Dorsolateral prefrontal cortex (tissue), 120 donors: ENCODE measurements at regions of chr2 and their contacts with region 1.

Region 1: DNA sequence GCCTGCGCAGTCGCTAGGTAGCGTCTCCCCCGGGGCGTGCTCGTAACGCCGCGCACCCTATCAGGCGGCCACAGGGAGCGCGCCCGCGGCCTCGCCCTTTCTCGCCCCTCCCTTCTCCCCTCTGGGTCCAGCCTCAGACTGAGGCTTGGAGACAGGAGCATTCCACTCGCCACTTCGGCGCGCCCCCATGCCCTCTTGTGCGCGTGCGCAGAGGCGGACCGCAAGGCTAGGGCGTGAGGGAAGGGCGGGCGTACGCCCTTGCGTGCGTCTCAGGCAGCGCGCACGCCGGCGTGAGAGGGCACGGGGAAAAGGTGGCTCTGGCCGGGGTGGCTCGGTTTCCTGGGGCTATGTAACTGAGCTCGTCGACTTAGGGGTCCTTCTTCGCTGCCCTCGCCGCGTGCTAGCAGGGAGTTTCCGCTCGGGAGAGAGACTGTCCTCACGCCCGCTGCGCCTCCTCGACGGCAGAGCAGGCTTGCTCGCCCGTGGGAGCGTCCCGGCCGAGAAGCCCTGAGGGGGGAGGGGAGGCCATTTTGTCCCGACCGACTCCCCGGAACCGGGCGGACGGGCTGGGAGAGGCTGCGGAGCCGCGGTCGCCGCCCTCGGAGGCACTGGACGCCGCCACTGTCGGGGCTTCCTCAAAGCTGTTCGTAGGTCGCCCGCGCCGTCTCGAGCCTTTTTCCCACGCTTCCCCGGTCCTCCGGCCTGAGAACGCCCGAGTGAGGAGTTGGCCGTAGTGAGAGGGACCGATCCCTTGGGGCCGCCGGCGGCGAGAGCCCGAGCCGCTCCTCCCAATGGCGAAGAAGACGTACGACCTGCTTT is at the start of gene RAB10:
- DNase-seq: peak; percentile 96 to 99 (median 98)
- H3K4me3 ChIP-seq: peak within 1 kb of the TSS; percentile 72 to 99 (median 95)
- H3K27ac ChIP-seq: peak within 1 kb of the TSS; percentile 76 to 99 (median 97)
- H3K27me3 ChIP-seq: no peaks in the 10 kb centered on the region
- CTCF ChIP-seq: peak in 39 of 56 donors; percentile 3 to 68 (median 33)
- total RNA-seq, gene RAB10: 88.3 to 149 (median 112) TPM

Region 2: GRCh38 chr2:25851740-25852503 is 182.1 kb before region 1 on chr2:
- intact Hi-C with region 1: no loop called
- DNase-seq: no peak
- H3K4me3 ChIP-seq: peak overlapping the region in 31 of 59 donors; percentile 2 to 47 (median 16)
- H3K27ac ChIP-seq: peak overlapping the region in 10 of 59 donors; percentile 5 to 57 (median 20)
- H3K27me3 ChIP-seq: no peaks in the 10 kb centered on the region
- CTCF ChIP-seq: peak; percentile 37 to 86 (median 76)

Region 3: DNA sequence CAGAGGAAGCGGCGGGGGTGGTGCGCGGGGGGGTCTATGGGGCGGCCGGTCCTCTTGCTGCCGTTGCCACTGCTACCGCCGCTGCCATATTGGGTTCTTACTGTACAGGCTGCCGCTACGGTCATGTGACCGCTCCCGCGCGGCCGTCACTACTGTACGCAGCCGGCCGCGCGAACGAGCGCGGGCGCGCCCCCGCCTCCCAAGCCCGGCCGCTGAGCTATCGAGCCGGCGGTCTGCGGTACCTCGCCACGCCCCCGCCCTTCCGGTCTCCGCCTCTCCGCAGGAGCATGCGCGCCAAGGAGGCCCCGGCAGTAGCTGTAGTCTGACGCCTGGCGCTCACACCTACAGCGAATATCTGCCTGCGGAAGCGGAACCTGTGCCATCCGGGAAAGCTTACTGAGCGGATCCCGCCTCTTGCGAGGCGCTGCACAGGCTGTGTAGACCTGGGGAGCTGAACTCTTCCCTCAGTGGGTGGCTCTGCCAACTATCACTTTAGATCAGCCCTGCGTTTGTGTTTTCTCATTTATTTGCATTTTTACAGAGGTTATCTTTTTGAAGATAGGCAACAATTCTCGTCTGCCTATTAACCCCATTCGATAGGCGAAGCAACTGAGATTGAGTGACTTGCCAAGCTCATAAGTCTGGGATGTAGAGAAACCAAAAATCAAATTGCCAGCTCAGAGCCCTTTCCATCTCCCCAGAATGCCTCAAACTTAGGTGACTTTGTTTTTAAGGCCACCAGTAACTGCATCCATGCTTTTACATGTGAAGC is 155.5 kb before region 1 on chr2 and contains the start of gene ASXL2:
- intact Hi-C with region 1: loop called (anchors 5 kb)
- DNase-seq: peak; percentile 92 to 98 (median 97)
- H3K4me3 ChIP-seq: peak within 1 kb of the TSS; percentile 65 to 99 (median 92)
- H3K27ac ChIP-seq: peak within 1 kb of the TSS; percentile 73 to 98 (median 93)
- H3K27me3 ChIP-seq: no peaks in the 10 kb centered on the region
- CTCF ChIP-seq: peak in 45 of 56 donors; percentile 15 to 63 (median 40)
- total RNA-seq, gene ASXL2: 24.4 to 56.0 (median 34.7) TPM

Region 4: GRCh38 chr2:25951071-25951547 is 82.9 kb before region 1 on chr2:
- intact Hi-C with region 1: loop called in 1 of 2 experiments (anchors 10 kb)
- DNase-seq: peak; percentile 70 to 95 (median 89)
- H3K4me3 ChIP-seq: peak overlapping the region in 43 of 59 donors; percentile 2 to 54 (median 27)
- H3K27ac ChIP-seq: peak overlapping the region in 53 of 59 donors; percentile 5 to 88 (median 74)
- H3K27me3 ChIP-seq: no peaks in the 10 kb centered on the region
- CTCF ChIP-seq: peak; percentile 88 to 99 (median 97)

Region 5: GRCh38 chr2:25982273-25982967 is 51.6 kb before region 1 on chr2 and contains the start of gene KIF3C:
- intact Hi-C with region 1: loop called (anchors 5 kb)
- DNase-seq: peak; percentile 69 to 93 (median 88)
- H3K4me3 ChIP-seq: peak within 1 kb of the TSS; percentile 69 to 98 (median 90)
- H3K27ac ChIP-seq: peak within 1 kb of the TSS; percentile 28 to 95 (median 89)
- H3K27me3 ChIP-seq: no peaks in the 10 kb centered on the region
- CTCF ChIP-seq: peak in 14 of 56 donors; percentile 2 to 33 (median 21)
- total RNA-seq, gene KIF3C: 82.2 to 364 (median 248) TPM

Region 6: DNA sequence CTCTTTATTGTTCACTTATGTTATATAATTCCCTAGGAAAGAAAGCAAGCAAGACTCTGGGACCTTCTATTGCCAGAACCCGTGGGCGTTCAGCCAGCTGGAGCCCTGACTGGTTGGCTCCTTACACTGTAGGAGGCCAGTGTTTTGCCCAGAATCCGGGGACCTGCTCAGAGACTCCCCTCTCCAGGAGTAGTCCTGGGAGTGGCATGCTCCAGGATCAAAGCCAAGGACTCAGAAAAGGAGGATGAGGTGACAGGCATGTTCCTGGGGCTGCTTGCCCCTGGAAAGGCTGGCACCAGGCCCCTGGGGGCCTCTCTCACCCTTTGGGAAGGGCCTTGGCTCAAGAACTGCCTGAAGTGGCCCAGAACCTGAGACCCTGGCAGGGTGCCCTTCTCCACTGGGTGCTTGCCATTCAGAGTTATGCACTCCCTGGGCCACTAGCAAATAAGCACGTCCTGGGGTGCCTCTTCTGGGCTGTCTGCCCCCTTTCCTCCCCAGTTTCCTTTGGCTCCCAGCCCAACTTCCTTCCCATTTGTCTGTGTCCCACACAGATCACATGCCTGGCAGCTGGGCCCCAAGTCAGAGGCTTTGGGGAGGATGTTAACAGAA is 32.2 kb before region 1 on chr2:
- intact Hi-C with region 1: loop called in 1 of 2 experiments (anchors 2 kb)
- DNase-seq: peak; percentile 65 to 91 (median 84)
- H3K4me3 ChIP-seq: peak overlapping the region in 2 of 59 donors; percentile 2 to 18
- H3K27ac ChIP-seq: peak overlapping the region in 56 of 59 donors; percentile 20 to 91 (median 75)
- H3K27me3 ChIP-seq: no peaks in the 10 kb centered on the region
- CTCF ChIP-seq: no peak

Region 7: DNA sequence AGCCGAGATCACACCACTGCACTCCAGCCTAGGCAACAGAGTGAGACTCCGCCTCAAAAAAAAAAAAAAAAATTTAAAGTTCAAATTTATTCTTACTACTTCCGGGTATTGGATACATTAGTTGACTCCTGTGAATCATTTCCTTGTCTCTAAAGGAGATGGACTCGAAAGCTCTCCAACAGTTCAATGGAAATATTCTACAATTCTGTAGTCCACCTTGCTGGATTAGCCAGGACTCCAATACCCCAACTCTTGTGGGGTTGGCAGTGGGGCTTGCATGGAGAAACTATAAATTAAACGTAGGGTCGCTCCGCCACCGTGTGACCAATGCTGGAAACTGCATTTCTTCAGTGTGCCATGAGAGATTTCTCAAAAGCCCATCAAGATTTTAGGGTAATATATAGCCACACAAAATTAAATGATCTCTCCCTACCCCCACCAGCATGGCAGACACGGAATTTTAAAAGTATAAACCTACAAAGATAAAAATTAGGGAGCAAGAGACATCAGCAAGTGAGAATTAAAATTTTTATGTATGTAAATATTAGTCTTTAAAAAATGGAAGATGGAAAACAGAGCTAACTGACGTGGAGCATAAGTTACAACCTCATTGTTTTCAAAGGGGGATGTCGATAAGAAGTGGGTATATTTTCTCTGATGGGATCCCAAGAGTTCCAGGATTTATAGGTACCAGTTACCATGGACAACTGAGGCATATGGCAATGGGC is 111.1 kb after region 1 on chr2:
- intact Hi-C with region 1: loop called in 1 of 2 experiments (anchors 5 kb)
- DNase-seq: peak; percentile 47 to 82 (median 66)
- H3K4me3 ChIP-seq: peak overlapping the region in 10 of 59 donors; percentile 2 to 34 (median 24)
- H3K27ac ChIP-seq: peak overlapping the region in 1 of 59 donors; percentile 28
- H3K27me3 ChIP-seq: no peaks in the 10 kb centered on the region
- CTCF ChIP-seq: peak; percentile 65 to 93 (median 84)